ENCODE measurements at regions of chr14 and their contacts with region 1.

Region 1: GRCh38 chr14:68816262-68816942 is 23.5 kb upstream of the ZFP36L1 start:
- DNase-seq: no peak
- H3K4me3 ChIP-seq: peak overlapping the region; percentile 61 to 68 (median 63)
- H3K27ac ChIP-seq: peak overlapping the region; percentile 96 to 98 (median 97)
- H3K4me1 ChIP-seq: peaks cover 39 to 82% (median 78%) of the 10 kb centered on the region in 4 donors
- H3K27me3 ChIP-seq: no peaks in the 10 kb centered on the region
- CTCF ChIP-seq: peak; percentile 97 to 99 (median 98)
- EP300 ChIP-seq: no peak
- POLR2A ChIP-seq: no peak

Region 2: GRCh38 chr14:68124979-68125731 is 691.2 kb before region 1 on chr14:
- intact Hi-C with region 1: no loop called
- DNase-seq: no peak
- H3K4me3 ChIP-seq: no peak overlapping the region
- H3K27ac ChIP-seq: peak overlapping the region; percentile 56 to 74 (median 68)
- H3K4me1 ChIP-seq: peaks cover 7 to 37% (median 25%) of the 10 kb centered on the region in 4 donors
- H3K27me3 ChIP-seq: no peaks in the 10 kb centered on the region
- CTCF ChIP-seq: no peak
- EP300 ChIP-seq: no peak
- POLR2A ChIP-seq: no peak

Region 3: DNA sequence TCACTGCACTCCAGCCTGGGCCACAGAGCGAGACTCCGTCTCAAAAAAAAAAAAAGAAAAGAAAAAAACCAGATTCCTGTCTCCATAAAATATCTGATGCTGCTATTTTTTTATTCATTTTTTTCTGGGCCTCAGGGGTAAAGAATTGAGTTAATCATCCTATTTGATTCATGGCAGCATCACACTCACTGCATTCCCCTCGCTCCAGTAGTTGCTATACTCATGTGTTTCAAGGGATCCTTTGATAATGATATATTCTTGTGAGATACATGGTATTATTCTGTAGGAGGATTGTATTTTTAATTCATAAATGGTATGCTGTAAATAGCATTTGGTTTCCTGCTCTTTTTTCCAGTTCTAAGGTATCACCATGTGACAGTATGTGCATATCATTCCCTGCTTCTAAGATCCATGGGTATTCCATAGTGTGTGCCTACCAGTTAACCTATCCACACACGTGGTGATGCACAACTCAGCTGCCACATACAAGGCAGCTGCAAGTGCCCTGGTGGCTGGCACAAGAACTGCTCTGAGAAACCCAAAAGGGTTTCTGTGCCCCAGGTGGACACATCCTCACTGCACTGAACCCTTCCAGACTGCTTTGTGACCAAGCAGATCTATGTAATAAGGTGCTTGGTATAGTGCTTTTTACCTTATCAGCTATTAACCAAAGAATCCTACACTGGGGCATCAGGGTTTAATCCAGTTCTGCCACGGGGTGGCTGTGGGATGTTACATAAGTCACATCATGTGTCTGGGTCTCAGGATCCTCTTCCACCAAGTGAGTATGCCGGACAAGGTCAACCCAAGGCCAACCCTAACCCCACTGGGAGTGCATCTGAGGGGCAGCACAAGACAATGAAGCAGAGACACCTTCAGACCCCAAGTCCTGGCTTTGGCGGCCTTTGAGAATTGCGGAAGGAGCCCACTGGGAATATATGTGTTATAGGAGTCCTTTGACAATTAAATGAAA is 98.1 kb before region 1 on chr14:
- intact Hi-C with region 1: no loop called
- DNase-seq: no peak
- H3K4me3 ChIP-seq: no peak overlapping the region
- H3K27ac ChIP-seq: no peak overlapping the region
- H3K4me1 ChIP-seq: peaks cover 1 to 9% (median 3%) of the 10 kb centered on the region in 4 donors
- H3K27me3 ChIP-seq: no peaks in the 10 kb centered on the region
- CTCF ChIP-seq: peak in 1 of 3 experiments; percentile 23
- EP300 ChIP-seq: no peak
- POLR2A ChIP-seq: no peak

Region 4: GRCh38 chr14:68795597-68796417 is 20.6 kb before region 1 on chr14:
- intact Hi-C with region 1: loop called (anchors 2 kb)
- DNase-seq: peak; percentile 96
- H3K4me3 ChIP-seq: peak overlapping the region; percentile 83 to 95 (median 87)
- H3K27ac ChIP-seq: peak overlapping the region; percentile 99 to 100 (median 100)
- H3K4me1 ChIP-seq: peaks cover 6 to 20% (median 18%) of the 10 kb centered on the region in 4 donors
- H3K27me3 ChIP-seq: peaks cover 0 to 4% (median 0%) of the 10 kb centered on the region in 4 donors
- CTCF ChIP-seq: peak in 2 of 3 experiments; percentile 83 to 86
- EP300 ChIP-seq: peak; percentile 30
- POLR2A ChIP-seq: peak; percentile 64